ENCODE measurements at regions of chr16 and their contacts with region 1.

Region 1: DNA sequence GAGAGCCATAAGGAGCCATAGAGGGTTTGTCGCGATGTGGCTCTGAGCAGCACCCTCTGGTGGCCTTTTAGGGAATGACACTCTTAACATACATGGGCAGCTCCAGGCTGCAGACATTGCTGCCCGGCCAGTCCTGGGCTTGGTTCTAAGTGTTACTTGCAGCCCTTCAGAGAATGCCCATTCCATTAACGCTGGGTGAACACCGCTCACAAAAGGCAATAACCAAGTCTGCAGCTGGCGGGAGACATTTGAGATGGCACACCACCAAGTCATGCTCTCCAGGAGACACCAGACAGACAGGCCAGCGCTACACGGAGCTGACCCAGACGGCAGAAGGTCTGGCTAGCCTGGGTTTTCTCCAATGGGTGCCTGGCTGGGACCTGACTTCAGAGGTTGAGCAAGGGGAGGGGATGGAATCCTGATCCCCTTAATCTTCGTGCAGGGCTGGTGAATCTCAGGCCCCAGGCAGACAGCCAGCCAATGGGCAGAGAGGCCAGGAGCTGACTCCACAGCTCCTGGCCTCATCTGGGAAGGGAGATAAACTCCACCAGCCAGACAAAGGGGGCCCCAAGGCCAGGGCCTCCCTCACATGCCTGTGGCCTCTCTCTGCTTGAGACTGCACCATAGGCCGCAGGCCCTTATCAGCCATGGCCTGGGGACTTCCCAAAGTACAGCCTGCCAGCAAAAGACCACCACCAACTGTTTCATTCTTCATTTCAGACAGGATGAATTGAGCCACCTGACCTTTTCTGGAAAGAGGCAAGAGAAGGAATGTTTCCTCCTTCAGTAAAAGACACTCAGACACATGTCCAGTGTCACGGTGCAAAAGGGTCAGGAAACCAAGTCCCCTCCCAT is 58.8 kb downstream of the ZDHHC7 start:
- DNase-seq: peak; percentile 56 to 87 (median 73)
- ATAC-seq: peak; percentile 96
- H3K4me3 ChIP-seq: no peak overlapping the region
- H3K27ac ChIP-seq: peak overlapping the region in 1 of 2 donors; percentile 33
- H3K4me1 ChIP-seq: peaks cover 7 to 28% of the 10 kb centered on the region in 2 donors
- H3K27me3 ChIP-seq: no peaks in the 10 kb centered on the region
- CTCF ChIP-seq: peak; percentile 82 to 97

Region 2: GRCh38 chr16:84730406-84731037 is 222.0 kb before region 1 on chr16:
- intact Hi-C with region 1: no loop called
- DNase-seq: peak in 2 of 4 donors; percentile 78 to 84
- ATAC-seq: peak; percentile 88
- H3K4me3 ChIP-seq: peak overlapping the region in 1 of 2 donors; percentile 13
- H3K27ac ChIP-seq: peak overlapping the region; percentile 79 to 84
- H3K4me1 ChIP-seq: peaks cover 19 to 71% of the 10 kb centered on the region in 2 donors
- H3K27me3 ChIP-seq: no peaks in the 10 kb centered on the region
- CTCF ChIP-seq: no peak

Region 3: GRCh38 chr16:84754353-84754856 is 198.2 kb before region 1 on chr16:
- intact Hi-C with region 1: loop called in 1 of 2 experiments (anchors 5 kb)
- DNase-seq: peak in 2 of 4 donors; percentile 75 to 85
- ATAC-seq: peak; percentile 93
- H3K4me3 ChIP-seq: no peak overlapping the region
- H3K27ac ChIP-seq: no peak overlapping the region
- H3K4me1 ChIP-seq: peaks cover 0 to 72% of the 10 kb centered on the region in 2 donors
- H3K27me3 ChIP-seq: no peaks in the 10 kb centered on the region
- CTCF ChIP-seq: peak; percentile 72 to 90

Measured in left lung (tissue), 14 donors.